Left ventricle myocardium inferior (tissue), 1 donor: ENCODE measurements at regions of chr5 and their contacts with region 1.

Region 1: DNA sequence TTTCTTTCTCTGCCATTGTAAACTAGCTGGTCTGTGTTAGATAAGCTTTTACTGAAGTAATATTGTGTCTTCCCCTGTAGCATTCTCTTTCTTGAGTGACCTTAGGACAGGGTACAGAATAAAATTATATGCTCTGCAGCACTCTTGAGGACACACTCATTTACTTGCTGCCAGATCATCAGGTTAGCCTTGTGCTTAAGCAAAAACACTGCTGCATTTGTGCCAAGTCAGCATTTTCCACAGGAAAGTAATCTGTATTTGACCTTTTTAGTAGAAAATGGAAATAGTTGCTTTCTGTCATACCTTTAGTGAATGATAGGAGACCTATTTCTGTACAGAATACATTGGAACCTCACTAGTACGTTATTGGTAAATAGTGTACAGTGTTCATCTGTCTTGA is 54.2 kb downstream of the LMNB1 start:
- DNase-seq: no peak
- H3K4me3 ChIP-seq: no peak overlapping the region
- H3K27ac ChIP-seq: no peak overlapping the region
- H3K4me1 ChIP-seq: no peaks in the 10 kb centered on the region
- H3K27me3 ChIP-seq: no peaks in the 10 kb centered on the region
- CTCF ChIP-seq: no peak

Region 2: GRCh38 chr5:126676195-126676624 is 154.9 kb before region 1 on chr5:
- intact Hi-C with region 1: no loop called
- DNase-seq: no peak
- H3K4me3 ChIP-seq: no peak overlapping the region
- H3K27ac ChIP-seq: no peak overlapping the region
- H3K4me1 ChIP-seq: no peaks in the 10 kb centered on the region
- H3K27me3 ChIP-seq: peaks cover 17% of the 10 kb centered on the region
- CTCF ChIP-seq: peak; percentile 85

Region 3: GRCh38 chr5:127313847-127314473 is 482.8 kb after region 1 on chr5:
- intact Hi-C with region 1: loop called (anchors 5 kb)
- DNase-seq: peak; percentile 49
- H3K4me3 ChIP-seq: no peak overlapping the region
- H3K27ac ChIP-seq: no peak overlapping the region
- H3K4me1 ChIP-seq: no peaks in the 10 kb centered on the region
- H3K27me3 ChIP-seq: peaks cover 11% of the 10 kb centered on the region
- CTCF ChIP-seq: peak; percentile 83